Activated T-helper 2 cell treated with anti-CD3 and anti-CD28 coated beads, Interferon-gamma antibody, Interleukin-2, Interleukin-4, amounts not matched to agents 10 μg/mL and 5 μg/mL and 100 μg/mL, durations not matched to agents 14 hours and 24 hours and 36 hours (primary cell): ENCODE measurements at regions of chr2 and their contacts with region 1.

Region 1: GRCh38 chr2:144516981-144517865 is 2.7 kb downstream of the ZEB2 start:
- DNase-seq: peak; percentile 57
- H3K4me3 Mint-ChIP-seq: no peak overlapping the region
- H3K27ac Mint-ChIP-seq: peak overlapping the region; percentile 99
- H3K4me1 Mint-ChIP-seq: peaks cover 25% of the 10 kb centered on the region
- H3K27me3 Mint-ChIP-seq: peaks cover 25% of the 10 kb centered on the region

Region 2: DNA sequence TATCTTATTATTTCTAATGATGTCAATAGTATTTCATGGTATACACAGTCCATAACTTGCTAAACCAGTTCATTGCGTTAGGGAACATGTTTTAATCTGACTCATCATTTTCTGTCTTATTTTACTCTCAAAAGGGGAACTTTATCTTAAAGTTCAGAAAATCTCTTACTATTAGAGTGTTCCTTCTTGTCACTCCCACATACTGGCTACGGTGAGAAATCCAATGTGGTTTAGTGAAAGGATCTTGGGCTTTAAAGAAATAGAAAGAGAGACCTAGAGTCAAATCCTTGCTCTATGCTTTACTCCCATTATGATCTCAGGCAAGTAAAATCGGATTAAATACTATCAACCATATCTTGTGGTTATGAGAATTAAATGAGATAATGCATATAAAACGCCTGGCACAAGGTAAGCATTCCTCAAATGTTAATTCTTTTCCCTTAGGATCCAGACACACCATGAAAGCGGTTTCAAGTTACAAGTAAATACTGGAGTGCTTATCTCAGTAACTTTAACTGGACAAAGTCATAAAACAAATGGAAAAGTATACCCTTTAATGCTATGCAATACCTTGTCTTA is 812.0 kb before region 1 on chr2:
- intact Hi-C with region 1: loop called (anchors 10 kb)
- DNase-seq: no peak
- H3K4me3 Mint-ChIP-seq: no peak overlapping the region
- H3K27ac Mint-ChIP-seq: peak overlapping the region; percentile 59
- H3K4me1 Mint-ChIP-seq: peaks cover 23% of the 10 kb centered on the region
- H3K27me3 Mint-ChIP-seq: no peaks in the 10 kb centered on the region

Region 3: DNA sequence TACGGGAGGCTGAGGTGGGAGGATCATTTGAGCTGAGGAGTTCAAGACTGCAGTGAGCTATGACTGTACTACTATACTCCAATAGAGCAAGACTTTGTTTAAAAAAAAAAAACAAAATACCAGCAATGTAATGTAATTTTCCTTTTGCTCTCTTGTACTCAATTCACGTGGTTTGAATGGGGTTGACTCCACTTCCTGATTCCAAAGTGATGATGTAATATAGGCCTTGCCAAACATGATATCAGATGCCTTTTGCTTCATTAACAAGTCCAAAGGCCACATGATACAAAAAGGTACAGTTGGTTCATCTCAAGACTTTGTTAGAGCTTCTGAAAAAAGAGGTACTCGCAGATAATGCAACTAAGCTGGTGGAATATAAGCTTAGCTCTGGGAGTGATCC is 319.1 kb before region 1 on chr2:
- intact Hi-C with region 1: loop called (anchors 5 kb)
- DNase-seq: no peak
- H3K4me3 Mint-ChIP-seq: no peak overlapping the region
- H3K27ac Mint-ChIP-seq: peak overlapping the region; percentile 82
- H3K4me1 Mint-ChIP-seq: peaks cover 58% of the 10 kb centered on the region
- H3K27me3 Mint-ChIP-seq: no peaks in the 10 kb centered on the region

Region 4: DNA sequence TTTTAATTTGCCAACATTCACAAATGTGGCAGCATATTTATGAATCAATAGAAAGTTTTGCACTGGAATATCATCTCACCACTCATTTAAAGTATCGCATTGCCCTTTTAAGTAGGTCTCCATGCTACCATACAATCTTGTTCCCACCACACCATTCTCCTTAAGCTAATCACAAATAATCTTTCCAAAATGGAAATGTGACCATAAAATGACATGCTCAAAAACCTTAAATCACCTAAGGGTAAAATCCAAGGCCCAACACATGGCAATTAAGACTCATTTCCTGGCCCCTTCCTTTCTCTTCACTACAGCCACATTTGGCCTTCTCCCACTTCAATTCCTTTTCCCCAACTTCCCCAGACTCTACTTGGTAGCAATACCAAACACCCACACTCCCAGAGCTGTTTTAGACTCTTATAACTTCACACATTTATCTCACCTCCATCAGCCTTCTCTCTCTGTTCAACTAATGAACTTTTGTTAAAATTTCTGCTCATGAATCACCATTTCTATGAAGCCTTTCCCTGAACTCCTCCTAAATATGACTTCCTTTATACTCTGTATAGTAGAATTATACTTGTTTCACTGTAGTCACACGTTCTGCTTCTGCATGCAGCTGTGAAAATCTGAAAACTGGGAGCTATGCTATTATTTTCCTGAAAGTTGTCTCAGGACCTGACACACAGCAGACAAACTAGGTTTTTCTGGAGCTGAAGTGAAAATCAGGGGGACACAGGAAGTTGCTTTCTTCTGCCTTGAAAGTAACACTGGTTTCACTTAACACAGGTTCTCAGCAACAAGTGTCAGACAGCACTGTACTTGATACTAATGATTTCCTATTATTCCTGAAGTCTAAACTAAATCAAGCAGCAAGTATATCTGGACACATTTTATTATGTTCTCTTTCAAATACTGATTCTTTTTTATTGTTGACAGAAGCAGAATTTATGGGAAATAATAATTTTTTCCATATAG is 301.2 kb before region 1 on chr2:
- intact Hi-C with region 1: no loop called
- DNase-seq: no peak
- H3K4me3 Mint-ChIP-seq: peak overlapping the region; percentile 40
- H3K27ac Mint-ChIP-seq: peak overlapping the region; percentile 94
- H3K4me1 Mint-ChIP-seq: peaks cover 46% of the 10 kb centered on the region
- H3K27me3 Mint-ChIP-seq: no peaks in the 10 kb centered on the region

Region 5: GRCh38 chr2:144332356-144333142 is 184.7 kb before region 1 on chr2:
- intact Hi-C with region 1: loop called (anchors 2 kb)
- DNase-seq: peak; percentile 88
- H3K4me3 Mint-ChIP-seq: peak overlapping the region; percentile 85
- H3K27ac Mint-ChIP-seq: peak overlapping the region; percentile 95
- H3K4me1 Mint-ChIP-seq: peaks cover 46% of the 10 kb centered on the region
- H3K27me3 Mint-ChIP-seq: no peaks in the 10 kb centered on the region

Region 6: GRCh38 chr2:144456680-144457079 is 60.5 kb before region 1 on chr2:
- intact Hi-C with region 1: loop called (anchors 2 kb)
- DNase-seq: no peak
- H3K4me3 Mint-ChIP-seq: no peak overlapping the region
- H3K27ac Mint-ChIP-seq: no peak overlapping the region
- H3K4me1 Mint-ChIP-seq: peaks cover 73% of the 10 kb centered on the region
- H3K27me3 Mint-ChIP-seq: no peaks in the 10 kb centered on the region

Region 7: GRCh38 chr2:144553379-144553778 is 36.2 kb after region 1 on chr2:
- intact Hi-C with region 1: loop called (anchors 2 kb)
- DNase-seq: no peak
- H3K4me3 Mint-ChIP-seq: no peak overlapping the region
- H3K27ac Mint-ChIP-seq: no peak overlapping the region
- H3K4me1 Mint-ChIP-seq: peaks cover 20% of the 10 kb centered on the region
- H3K27me3 Mint-ChIP-seq: peaks cover 16% of the 10 kb centered on the region